ENCODE measurements at regions of chr11 and their contacts with region 1.

Region 1: DNA sequence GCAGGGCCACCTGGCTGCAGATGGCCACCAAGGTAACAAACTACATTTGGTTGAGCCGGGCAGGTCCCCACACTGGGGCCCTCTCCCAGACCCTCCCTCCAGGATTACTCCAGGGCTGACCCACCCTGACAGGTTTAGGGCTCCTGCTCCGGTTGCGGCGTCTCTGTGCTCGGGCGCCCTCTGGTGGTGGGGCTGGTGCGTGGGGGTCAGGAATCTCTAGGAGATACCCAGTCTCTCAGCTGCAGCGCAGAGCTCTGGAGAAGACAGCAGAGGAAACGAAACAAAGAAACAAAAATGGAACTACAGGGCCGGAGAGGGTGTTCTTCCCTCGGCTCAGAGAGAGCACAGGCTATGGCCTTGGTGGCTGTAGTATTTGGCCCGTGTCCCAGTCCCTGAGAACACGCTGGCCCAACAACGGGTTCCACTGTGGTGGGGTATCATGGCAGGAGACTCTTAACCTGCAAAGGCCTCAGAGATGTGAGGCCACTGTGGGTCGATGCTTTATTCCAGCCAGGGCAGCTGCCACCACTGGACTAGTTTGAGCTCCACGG is 2.4 kb downstream of the C11orf96 start:
- DNase-seq: peak; percentile 56
- H3K4me3 Mint-ChIP-seq: peak overlapping the region; percentile 86
- H3K27ac Mint-ChIP-seq: peak overlapping the region; percentile 40
- H3K4me1 Mint-ChIP-seq: peaks cover 24% of the 10 kb centered on the region
- H3K27me3 Mint-ChIP-seq: peaks cover 62% of the 10 kb centered on the region

Region 2: DNA sequence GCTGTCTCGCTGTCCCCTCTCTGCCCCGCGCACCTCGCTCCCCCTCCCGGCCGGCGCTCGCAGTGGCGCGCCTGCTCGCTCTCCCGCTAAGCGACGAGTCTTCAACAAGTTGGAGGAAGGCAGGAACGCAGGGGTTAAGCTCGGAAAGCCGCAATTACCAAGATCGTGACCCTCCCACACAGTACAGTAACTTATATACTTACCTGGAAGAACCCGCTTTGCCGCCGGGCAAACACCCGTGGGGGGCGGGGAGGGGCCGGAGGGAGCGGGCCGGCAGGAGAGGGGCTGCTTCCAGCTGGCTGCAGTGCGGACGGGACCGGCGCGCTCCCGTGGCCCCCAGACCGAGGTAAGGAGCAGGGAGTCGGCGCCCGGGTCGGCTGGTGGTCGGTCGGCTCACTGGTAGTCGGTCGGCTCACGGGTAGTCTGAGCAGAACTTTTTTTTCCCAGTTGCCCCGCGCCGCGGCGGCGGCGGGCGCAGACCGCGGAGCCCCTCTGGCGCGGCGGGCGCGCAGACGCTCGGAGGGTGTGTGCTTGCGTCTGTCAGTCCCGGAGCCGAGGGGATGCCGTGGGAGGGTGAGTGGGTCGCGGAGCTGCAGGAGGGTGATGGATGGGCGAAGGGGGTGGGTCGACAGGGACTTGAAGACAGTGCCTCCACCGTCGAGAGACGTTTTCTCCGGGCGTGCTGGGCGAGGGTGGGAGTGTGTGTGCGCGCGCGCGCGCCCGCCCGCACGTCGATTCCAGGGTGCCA is 365.5 kb before region 1 on chr11:
- intact Hi-C with region 1: loop called (anchors 5 kb)
- DNase-seq: no peak
- H3K4me3 Mint-ChIP-seq: peak overlapping the region; percentile 39
- H3K27ac Mint-ChIP-seq: peak overlapping the region; percentile 23
- H3K4me1 Mint-ChIP-seq: peaks cover 12% of the 10 kb centered on the region
- H3K27me3 Mint-ChIP-seq: peaks cover 83% of the 10 kb centered on the region

Region 3: DNA sequence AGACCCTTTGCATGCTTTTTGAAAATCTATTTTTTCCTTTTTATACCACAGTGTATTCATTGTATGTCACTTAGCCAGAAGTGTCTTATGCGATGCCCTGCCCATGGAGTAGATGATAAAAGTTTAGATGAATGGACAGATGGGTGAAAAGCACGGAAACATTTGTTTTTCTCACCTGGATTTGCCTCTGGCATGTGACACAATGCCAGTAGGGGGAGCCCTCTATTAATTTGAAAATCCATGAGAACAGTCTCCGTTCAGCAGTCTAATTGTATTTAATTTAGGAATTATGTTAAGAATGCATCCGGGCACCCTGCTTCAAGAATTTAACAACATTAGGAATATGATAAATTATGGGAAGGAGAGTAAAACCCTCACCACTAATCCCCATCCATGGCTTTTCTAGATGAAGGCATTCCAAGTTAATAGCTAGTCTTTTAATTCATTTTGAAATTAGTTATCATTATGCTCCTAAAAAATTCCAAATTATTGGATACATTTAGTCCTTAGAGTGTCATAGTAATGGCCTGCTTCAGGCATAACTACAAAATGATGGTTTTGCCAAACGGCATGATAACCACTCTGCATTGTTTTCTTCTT is 119.5 kb before region 1 on chr11:
- intact Hi-C with region 1: loop called (anchors 2 kb)
- DNase-seq: no peak
- H3K4me3 Mint-ChIP-seq: no peak overlapping the region
- H3K27ac Mint-ChIP-seq: no peak overlapping the region
- H3K4me1 Mint-ChIP-seq: peaks cover 4% of the 10 kb centered on the region
- H3K27me3 Mint-ChIP-seq: no peaks in the 10 kb centered on the region

Region 4: GRCh38 chr11:43895601-43896000 is 49.2 kb before region 1 on chr11:
- intact Hi-C with region 1: loop called (anchors 1 kb)
- DNase-seq: no peak
- H3K4me3 Mint-ChIP-seq: no peak overlapping the region
- H3K27ac Mint-ChIP-seq: no peak overlapping the region
- H3K4me1 Mint-ChIP-seq: no peaks in the 10 kb centered on the region
- H3K27me3 Mint-ChIP-seq: no peaks in the 10 kb centered on the region

Region 5: GRCh38 chr11:43920598-43921419 is 24.0 kb before region 1 on chr11:
- intact Hi-C with region 1: loop called (anchors 1 kb)
- DNase-seq: no peak
- H3K4me3 Mint-ChIP-seq: no peak overlapping the region
- H3K27ac Mint-ChIP-seq: peak overlapping the region; percentile 74
- H3K4me1 Mint-ChIP-seq: peaks cover 19% of the 10 kb centered on the region
- H3K27me3 Mint-ChIP-seq: no peaks in the 10 kb centered on the region

Region 6: GRCh38 chr11:44065841-44066731 is 121.2 kb after region 1 on chr11 and contains the start of gene ACCS:
- intact Hi-C with region 1: loop called (anchors 5 kb)
- DNase-seq: peak; percentile 83
- H3K4me3 Mint-ChIP-seq: peak within 1 kb of the TSS; percentile 91
- H3K27ac Mint-ChIP-seq: peak within 1 kb of the TSS; percentile 94
- H3K4me1 Mint-ChIP-seq: peaks cover 29% of the 10 kb centered on the region
- H3K27me3 Mint-ChIP-seq: peaks cover 4% of the 10 kb centered on the region
- total RNA-seq, gene ACCS: 14.7 and 18.1 TPM in 2 replicates

Measured in activated T-helper 1 cell treated with anti-CD3 and anti-CD28 coated beads, Interleukin-12 subunit alpha, Interleukin-12 subunit beta, Interleukin-2, Interleukin-4 antibody, amounts not matched to agents 30 ng/mL and 10 ng/mL and 1 ng/mL, durations not matched to agents 14 hours and 24 hours and 36 hours (primary cell).